MCF 10A (cell line): ENCODE measurements at regions of chr6 and their contacts with region 1.

Region 1: DNA sequence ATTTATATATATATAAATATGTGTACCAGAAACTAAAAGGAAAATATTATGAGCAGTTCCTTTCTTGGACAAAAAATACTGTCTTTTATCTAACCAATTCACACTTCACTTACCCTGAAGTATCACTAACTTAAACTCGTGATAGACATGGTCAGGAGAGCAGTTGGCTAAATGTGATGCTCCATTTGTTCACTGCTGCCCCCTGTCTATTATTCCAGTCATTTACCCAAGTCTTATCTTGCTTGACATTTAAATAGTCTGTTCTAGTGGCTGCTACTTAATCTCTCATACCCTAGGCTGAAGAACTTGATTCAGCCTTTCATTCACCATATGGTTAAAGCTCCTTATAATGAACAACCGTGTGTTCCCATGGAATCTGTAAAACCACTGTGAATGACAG is 789.6 kb upstream of the EYS start:
- DNase-seq: peak; percentile 51
- H3K4me3 Mint-ChIP-seq: no peak overlapping the region
- H3K27ac Mint-ChIP-seq: no peak overlapping the region
- H3K4me1 Mint-ChIP-seq: no peaks in the 10 kb centered on the region
- H3K27me3 Mint-ChIP-seq: no peaks in the 10 kb centered on the region
- CTCF ChIP-seq: peak; percentile 44

Region 2: GRCh38 chr6:66478705-66479104 is 18.0 kb before region 1 on chr6:
- CTCF ChIA-PET with region 1: interaction called, 10 read pairs
- POLR2A ChIA-PET with region 1: no interaction called
- intact Hi-C with region 1: no loop called
- DNase-seq: peak; percentile 71
- H3K4me3 Mint-ChIP-seq: no peak overlapping the region
- H3K27ac Mint-ChIP-seq: no peak overlapping the region
- H3K4me1 Mint-ChIP-seq: no peaks in the 10 kb centered on the region
- H3K27me3 Mint-ChIP-seq: no peaks in the 10 kb centered on the region
- CTCF ChIP-seq: no peak

Region 3: GRCh38 chr6:66526061-66526460 is 29.4 kb after region 1 on chr6:
- CTCF ChIA-PET with region 1: no interaction called
- POLR2A ChIA-PET with region 1: no interaction called
- intact Hi-C with region 1: no loop called
- DNase-seq: peak; percentile 4
- H3K4me3 Mint-ChIP-seq: no peak overlapping the region
- H3K27ac Mint-ChIP-seq: no peak overlapping the region
- H3K4me1 Mint-ChIP-seq: no peaks in the 10 kb centered on the region
- H3K27me3 Mint-ChIP-seq: no peaks in the 10 kb centered on the region
- CTCF ChIP-seq: no peak